ENCODE measurements at regions of chr4 and their contacts with region 1.

Region 1: DNA sequence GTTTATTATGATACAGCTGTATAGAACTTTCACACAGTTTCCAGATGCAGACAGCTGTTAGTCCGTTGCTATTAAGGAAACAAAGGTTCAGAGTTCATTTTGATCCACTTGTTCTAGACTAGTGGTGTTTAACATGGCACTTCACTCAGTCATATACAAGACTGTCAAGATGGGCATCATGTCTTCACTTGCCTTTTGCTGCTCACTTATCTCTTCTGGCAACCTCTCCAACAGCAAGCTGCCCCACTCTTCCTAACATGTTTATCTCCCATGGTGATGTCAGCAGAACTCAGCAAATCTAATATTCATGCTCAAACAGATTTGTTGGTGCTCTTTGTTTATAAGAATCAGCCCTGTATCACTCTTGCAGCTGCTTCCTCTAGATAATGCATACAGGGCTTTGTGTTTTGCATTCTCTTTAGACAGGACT is 236.2 kb upstream of the HAND2 start:
- DNase-seq: no peak
- ATAC-seq: peak in 2 of 4 donors; percentile 20 to 30
- H3K4me3 ChIP-seq: no peak overlapping the region
- H3K27ac ChIP-seq: no peak overlapping the region
- H3K4me1 ChIP-seq: peaks cover 0 to 15% (median 1%) of the 10 kb centered on the region in 12 donors
- H3K27me3 ChIP-seq: no peaks in the 10 kb centered on the region
- CTCF ChIP-seq: no peak
- POLR2A ChIP-seq: no peak

Region 2: GRCh38 chr4:174120446-174121295 is 354.5 kb after region 1 on chr4:
- intact Hi-C with region 1: loop called in 1 of 10 experiments (anchors 10 kb)
- DNase-seq: peak; percentile 50 to 79 (median 53)
- ATAC-seq: peak; percentile 50 to 92 (median 80)
- H3K4me3 ChIP-seq: peak overlapping the region; percentile 16 to 59 (median 40)
- H3K27ac ChIP-seq: peak overlapping the region in 7 of 12 donors; percentile 6 to 74 (median 32)
- H3K4me1 ChIP-seq: peaks cover 0 to 22% (median 2%) of the 10 kb centered on the region in 12 donors
- H3K27me3 ChIP-seq: no peaks in the 10 kb centered on the region
- CTCF ChIP-seq: peak; percentile 28 to 64 (median 54)
- POLR2A ChIP-seq: no peak

Measured in heart left ventricle (tissue), 16 donors.